ENCODE measurements at regions of chr2 and their contacts with region 1.

Region 1: GRCh38 chr2:70553584-70554337 is at the start of gene TGFA:
- DNase-seq: peak; percentile 41 to 65
- ATAC-seq: peak; percentile 83 to 95 (median 86)
- H3K4me3 ChIP-seq: peak within 1 kb of the TSS; percentile 42 to 82 (median 74)
- H3K27ac ChIP-seq: peak within 1 kb of the TSS in 8 of 10 donors; percentile 2 to 90 (median 54)
- H3K4me1 ChIP-seq: peaks cover 0 to 29% (median 14%) of the 10 kb centered on the region in 9 donors
- H3K27me3 ChIP-seq: peaks cover 6 to 78% (median 56%) of the 10 kb centered on the region in 7 donors
- CTCF ChIP-seq: peak in 8 of 9 donors; percentile 42 to 82 (median 72)
- total RNA-seq, gene TGFA: 0.28 to 3.4 (median 1.3) TPM

Region 2: DNA sequence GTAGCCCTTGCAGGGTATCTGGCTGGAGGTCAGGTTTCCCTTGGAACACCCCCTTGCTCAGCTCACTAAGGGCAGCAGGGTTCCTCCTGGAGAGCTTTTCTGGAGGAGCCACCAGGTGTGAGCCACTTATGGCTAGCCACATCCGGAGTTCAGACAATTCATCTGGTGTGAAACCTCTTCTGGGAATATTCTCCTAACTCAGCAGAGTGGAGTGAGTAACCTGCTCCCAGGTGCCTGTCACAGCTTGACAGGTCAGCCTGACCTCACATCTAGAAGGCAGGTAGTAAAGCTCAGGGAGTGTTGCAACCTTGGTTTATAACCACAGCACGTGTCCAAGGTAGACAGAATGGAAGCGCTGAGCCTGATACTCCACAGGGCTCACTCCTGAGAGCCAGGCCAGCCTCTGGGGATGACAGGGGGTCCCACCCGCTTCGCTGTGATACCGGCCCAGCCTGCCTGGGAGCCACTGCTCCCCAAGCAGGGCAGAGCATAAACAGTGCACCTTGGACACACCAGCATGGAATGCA is 62.5 kb after region 1 on chr2:
- intact Hi-C with region 1: loop called in 1 of 10 experiments (anchors 1 kb)
- DNase-seq: no peak
- ATAC-seq: no peak
- H3K4me3 ChIP-seq: no peak overlapping the region
- H3K27ac ChIP-seq: no peak overlapping the region
- H3K4me1 ChIP-seq: no peaks in the 10 kb centered on the region
- H3K27me3 ChIP-seq: peaks cover 0 to 15% (median 0%) of the 10 kb centered on the region in 7 donors
- CTCF ChIP-seq: no peak

Measured in heart right ventricle (tissue), 16 donors.